Sciatic nerve (tissue), 2 donors: ENCODE measurements at regions of chr9 and their contacts with region 1.

Region 1: DNA sequence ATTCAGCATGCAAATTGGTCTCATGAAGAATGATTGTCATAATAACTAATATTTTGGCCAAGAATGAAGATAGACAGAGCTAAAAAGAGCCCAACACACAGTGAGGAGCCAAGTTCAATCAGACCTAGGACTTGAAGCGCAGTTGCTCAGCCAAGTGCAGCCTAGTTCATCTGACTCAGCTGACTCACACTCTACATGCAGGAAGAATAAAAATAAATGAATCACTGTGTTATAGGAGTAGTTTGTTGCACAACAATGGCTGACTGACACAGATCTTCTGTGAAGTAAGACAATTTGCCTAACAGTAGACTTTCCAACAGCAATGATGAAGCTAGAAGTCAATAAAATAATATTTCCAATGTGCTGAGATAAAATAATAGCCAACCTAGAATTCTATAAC is 261.5 kb downstream of the CEMIP2 start:
- DNase-seq: no peak
- ATAC-seq: peak; percentile 81

Region 2: DNA sequence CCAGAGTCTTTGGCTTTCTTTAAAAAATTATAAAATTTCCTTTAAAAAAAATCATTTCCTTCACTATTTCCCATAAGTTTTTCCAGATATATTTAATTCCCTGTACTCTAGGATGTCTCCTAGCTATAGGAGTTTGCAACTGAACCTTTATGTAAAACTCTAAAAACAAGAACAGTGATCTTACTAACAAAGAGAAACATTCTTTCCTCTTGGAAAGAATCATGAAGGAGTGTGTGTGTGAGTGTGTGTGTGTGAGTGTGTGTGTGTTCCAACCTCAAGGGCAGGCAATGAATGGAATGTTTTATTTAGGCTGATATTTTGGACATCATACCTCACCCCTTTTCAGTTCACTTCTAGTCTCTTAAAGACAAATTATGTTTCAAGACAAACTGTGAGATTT is 47.7 kb before region 1 on chr9:
- intact Hi-C with region 1: no loop called
- DNase-seq: no peak
- ATAC-seq: no peak

Region 3: DNA sequence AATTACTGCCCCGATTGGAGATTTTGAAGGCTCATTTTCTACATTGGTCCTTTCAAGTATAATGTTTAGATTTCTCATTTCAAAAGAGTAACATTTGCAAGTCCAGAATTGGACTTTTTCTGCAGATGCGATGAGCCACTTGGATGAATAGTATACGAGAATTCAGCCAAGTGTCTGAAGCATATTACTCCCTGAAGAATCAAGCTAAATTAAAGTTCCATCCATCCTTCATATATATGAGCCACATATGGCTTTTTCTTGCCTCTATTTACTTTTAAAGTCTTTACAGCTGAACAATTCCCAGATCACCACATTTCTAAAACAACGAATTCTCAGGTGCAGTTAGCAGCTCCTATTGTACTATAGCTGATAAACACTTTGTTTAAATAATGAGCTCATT is 27.2 kb before region 1 on chr9:
- intact Hi-C with region 1: loop called (anchors 2 kb)
- DNase-seq: no peak
- ATAC-seq: no peak